GM12878 (cell line): ENCODE measurements at regions of chr1 and their contacts with region 1.

Region 1: DNA sequence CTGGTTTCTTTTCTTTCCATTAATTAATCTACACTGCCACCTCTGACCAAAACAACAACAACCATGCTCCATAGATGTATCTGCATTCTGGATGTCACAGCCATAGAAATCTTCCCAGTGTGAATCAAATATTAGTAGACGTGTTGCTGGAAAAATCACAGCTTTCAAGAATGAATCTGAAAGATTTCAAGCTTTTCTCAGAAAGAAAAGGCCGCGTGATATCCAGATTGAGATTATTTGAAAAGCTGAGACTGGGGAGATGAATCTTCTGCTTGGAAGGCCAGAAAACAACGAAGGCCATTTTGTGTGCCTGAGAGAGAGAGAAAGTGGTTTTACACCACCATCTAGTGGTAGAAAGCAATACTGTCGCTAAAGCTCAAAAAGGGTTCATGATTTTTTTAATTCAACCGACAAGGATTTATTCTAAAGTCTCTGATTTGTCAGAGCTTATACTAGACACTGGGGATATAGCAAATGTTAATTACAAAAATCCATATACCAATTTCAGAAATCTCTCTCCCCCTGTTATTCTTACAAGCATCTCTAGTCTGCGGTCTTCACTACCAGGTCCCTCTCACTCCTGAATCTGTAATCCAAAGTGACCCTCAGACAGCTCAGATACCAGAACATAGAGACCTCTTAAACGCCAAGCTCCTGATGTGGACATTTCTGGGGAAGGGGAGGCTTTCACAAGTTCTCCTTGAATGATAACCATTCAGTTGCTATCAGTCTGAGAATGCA is 87.5 kb upstream of the SGIP1 start:
- DNase-seq: peak; percentile 63
- ATAC-seq: peak; percentile 73
- H3K4me3 ChIP-seq: no peak overlapping the region
- H3K27ac ChIP-seq: peak overlapping the region; percentile 98
- H3K4me1 ChIP-seq: peaks cover 12% of the 10 kb centered on the region
- H3K27me3 ChIP-seq: no peaks in the 10 kb centered on the region
- CTCF ChIP-seq: peak; percentile 71 to 84 (median 78); a peak in 5 of 6 replicates
- EP300 ChIP-seq: no peak
- POLR2A ChIP-seq: no peak
- RAD21 ChIP-seq: peak; percentile 99

Region 2: GRCh38 chr1:65812065-65812464 is 634.4 kb before region 1 on chr1:
- CTCF ChIA-PET with region 1: no interaction called
- POLR2A ChIA-PET with region 1: no interaction called
- RAD21 ChIA-PET with region 1: no interaction called
- SMC1A ChIA-PET with region 1: interaction called, 3 read pairs
- in situ Hi-C with region 1: no loop called
- intact Hi-C with region 1: loop called (anchors 10 kb)
- DNase-seq: peak; percentile 96
- ATAC-seq: peak; percentile 100
- H3K4me3 ChIP-seq: no peak overlapping the region
- H3K27ac ChIP-seq: no peak overlapping the region; the same call in 1 of the 2 replicates
- H3K4me1 ChIP-seq: peaks cover 8% of the 10 kb centered on the region
- H3K27me3 ChIP-seq: no peaks in the 10 kb centered on the region
- CTCF ChIP-seq: no peak
- EP300 ChIP-seq: peak in 1 of 2 experiments; percentile 26; a peak in 1 of 4 replicates
- POLR2A ChIP-seq: no peak
- RAD21 ChIP-seq: peak; percentile 11; the same call in 1 of the 2 replicates

Region 3: GRCh38 chr1:66262211-66262963 is 184.0 kb before region 1 on chr1:
- CTCF ChIA-PET with region 1: interaction called, 595 read pairs
- POLR2A ChIA-PET with region 1: interaction called, 3 read pairs
- RAD21 ChIA-PET with region 1: interaction called, 519 read pairs
- SMC1A ChIA-PET with region 1: interaction called, 663 read pairs
- in situ Hi-C with region 1: no loop called
- intact Hi-C with region 1: no loop called
- DNase-seq: no peak
- ATAC-seq: no peak
- H3K4me3 ChIP-seq: no peak overlapping the region
- H3K27ac ChIP-seq: no peak overlapping the region
- H3K4me1 ChIP-seq: peaks cover 4% of the 10 kb centered on the region; the same call in 1 of the 2 replicates
- H3K27me3 ChIP-seq: no peaks in the 10 kb centered on the region
- CTCF ChIP-seq: no peak
- EP300 ChIP-seq: no peak
- POLR2A ChIP-seq: no peak
- RAD21 ChIP-seq: no peak

Region 4: DNA sequence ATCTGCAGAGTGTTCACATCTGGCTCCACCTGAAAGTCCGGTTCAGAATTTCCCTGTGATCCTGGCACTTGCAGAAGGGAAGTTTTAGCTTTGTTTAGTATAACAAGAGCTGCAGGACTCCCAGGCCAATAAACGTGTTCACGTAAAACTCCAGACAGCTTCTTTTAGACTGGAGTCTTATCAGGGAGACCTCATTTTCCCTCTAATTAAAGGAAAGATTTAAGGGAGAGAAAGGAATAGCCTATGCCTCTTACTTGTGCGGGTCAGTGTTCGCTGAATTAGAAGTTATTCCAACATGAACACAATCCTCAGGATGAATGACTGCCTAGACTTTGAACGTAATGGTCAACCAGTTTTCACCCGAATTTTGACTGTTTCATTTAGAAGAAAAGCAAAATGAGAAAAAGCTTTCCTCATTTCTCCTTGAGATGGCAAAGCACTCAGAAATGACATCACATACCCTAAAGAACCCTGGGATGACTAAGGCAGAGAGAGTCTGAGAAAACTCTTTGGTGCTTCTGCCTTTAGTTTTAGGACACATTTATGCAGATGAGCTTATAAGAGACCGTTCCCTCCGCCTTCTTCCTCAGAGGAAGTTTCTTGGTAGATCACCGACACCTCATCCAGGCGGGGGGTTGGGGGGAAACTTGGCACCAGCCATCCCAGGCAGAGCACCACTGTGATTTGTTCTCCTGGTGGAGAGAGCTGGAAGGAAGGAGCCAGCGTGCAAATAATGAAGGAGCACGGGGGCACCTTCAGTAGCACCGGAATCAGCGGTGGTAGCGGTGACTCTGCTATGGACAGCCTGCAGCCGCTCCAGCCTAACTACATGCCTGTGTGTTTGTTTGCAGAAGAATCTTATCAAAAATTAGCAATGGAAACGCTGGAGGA is 114.5 kb before region 1 on chr1:
- CTCF ChIA-PET with region 1: interaction called, 15 read pairs
- POLR2A ChIA-PET with region 1: interaction called, 4 read pairs
- RAD21 ChIA-PET with region 1: interaction called, 23 read pairs
- SMC1A ChIA-PET with region 1: interaction called, 80 read pairs
- in situ Hi-C with region 1: no loop called
- intact Hi-C with region 1: loop called (anchors 2 kb)
- DNase-seq: no peak
- ATAC-seq: peak; percentile 13
- H3K4me3 ChIP-seq: peak overlapping the region; percentile 81
- H3K27ac ChIP-seq: peak overlapping the region; percentile 93
- H3K4me1 ChIP-seq: peaks cover 49% of the 10 kb centered on the region
- H3K27me3 ChIP-seq: no peaks in the 10 kb centered on the region
- CTCF ChIP-seq: no peak
- EP300 ChIP-seq: peak in 1 of 2 experiments; percentile 41; a peak in 1 of 4 replicates
- POLR2A ChIP-seq: peak; percentile 48; the same call in 1 of the 2 replicates
- RAD21 ChIP-seq: no peak

Region 5: GRCh38 chr1:66374561-66375111 is 71.8 kb before region 1 on chr1:
- CTCF ChIA-PET with region 1: interaction called, 396 read pairs
- POLR2A ChIA-PET with region 1: interaction called, 7 read pairs
- RAD21 ChIA-PET with region 1: interaction called, 163 read pairs
- SMC1A ChIA-PET with region 1: interaction called, 196 read pairs
- in situ Hi-C with region 1: no loop called
- intact Hi-C with region 1: loop called (anchors 1 kb)
- DNase-seq: peak; percentile 96
- ATAC-seq: peak; percentile 66
- H3K4me3 ChIP-seq: no peak overlapping the region
- H3K27ac ChIP-seq: peak overlapping the region; percentile 92
- H3K4me1 ChIP-seq: peaks cover 65% of the 10 kb centered on the region
- H3K27me3 ChIP-seq: no peaks in the 10 kb centered on the region
- CTCF ChIP-seq: no peak
- EP300 ChIP-seq: peak; percentile 75 to 85; a peak in 3 of 4 replicates
- POLR2A ChIP-seq: no peak
- RAD21 ChIP-seq: peak; percentile 16

Region 6: GRCh38 chr1:66402194-66402593 is 44.2 kb before region 1 on chr1:
- CTCF ChIA-PET with region 1: interaction called, 48 read pairs
- POLR2A ChIA-PET with region 1: interaction called, 6 read pairs
- RAD21 ChIA-PET with region 1: interaction called, 49 read pairs
- SMC1A ChIA-PET with region 1: interaction called, 75 read pairs
- in situ Hi-C with region 1: no loop called
- intact Hi-C with region 1: loop called (anchors 1 kb)
- DNase-seq: peak; percentile 87
- ATAC-seq: peak; percentile 76
- H3K4me3 ChIP-seq: no peak overlapping the region
- H3K27ac ChIP-seq: peak overlapping the region; percentile 77
- H3K4me1 ChIP-seq: peaks cover 58% of the 10 kb centered on the region
- H3K27me3 ChIP-seq: no peaks in the 10 kb centered on the region
- CTCF ChIP-seq: no peak
- EP300 ChIP-seq: peak; percentile 88 to 95; a peak in 3 of 4 replicates
- POLR2A ChIP-seq: 0 out of 2 replicates have a peak, but pooled peaks have one; percentile 42
- RAD21 ChIP-seq: no peak